Endothelial cell of umbilical vein (primary cell): ENCODE measurements at regions of chr2 and their contacts with region 1.

Region 1: DNA sequence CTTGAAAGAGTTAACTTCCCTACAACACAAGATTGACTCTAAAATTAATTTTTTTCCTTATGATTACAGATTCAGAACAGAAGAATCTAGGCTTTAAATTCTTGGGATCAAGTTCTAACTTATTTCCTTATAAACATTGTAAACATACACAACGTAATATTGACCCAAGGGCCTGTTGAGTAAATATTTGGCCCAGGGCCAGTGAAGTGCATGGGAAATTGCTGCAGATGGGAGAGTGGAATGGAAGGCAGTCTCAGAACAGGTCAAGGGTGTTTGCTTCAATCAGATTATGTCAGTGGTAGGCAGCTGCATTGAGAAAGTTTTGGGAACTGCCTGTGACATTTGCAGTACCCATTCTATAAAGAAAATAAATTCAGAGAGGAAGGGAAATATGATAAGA is 137.6 kb downstream of the MYO1B start:
- DNase-seq: peak; percentile 78
- H3K4me3 ChIP-seq: no peak overlapping the region
- H3K27ac ChIP-seq: peak overlapping the region; percentile 23
- H3K4me1 ChIP-seq: peaks cover 53% of the 10 kb centered on the region
- H3K27me3 ChIP-seq: no peaks in the 10 kb centered on the region
- CTCF ChIP-seq: no peak
- POLR2A ChIP-seq: no peak

Region 2: DNA sequence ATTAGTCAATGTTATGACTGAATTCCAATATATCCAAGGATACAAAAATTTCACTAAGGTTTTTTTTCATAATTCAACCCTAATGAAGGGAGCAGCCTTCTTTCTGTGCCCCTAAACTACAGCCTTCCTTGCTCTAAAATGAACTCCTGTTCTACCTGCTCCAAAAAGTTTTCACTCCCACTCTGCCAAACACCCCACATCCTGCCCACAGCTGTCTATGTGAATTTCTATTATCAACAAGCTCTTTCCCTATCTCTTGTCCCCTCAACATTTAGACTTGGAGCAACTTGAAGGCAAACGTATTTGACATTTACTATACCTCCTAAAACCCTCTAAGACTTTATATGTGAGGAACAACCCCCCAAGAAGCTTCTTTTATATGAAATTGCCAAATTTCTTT is 234.5 kb before region 1 on chr2:
- CTCF ChIA-PET with region 1: no interaction called
- POLR2A ChIA-PET with region 1: no interaction called
- dilution Hi-C with region 1: no loop called
- intact Hi-C with region 1: no loop called
- DNase-seq: no peak
- H3K4me3 ChIP-seq: no peak overlapping the region
- H3K27ac ChIP-seq: no peak overlapping the region
- H3K4me1 ChIP-seq: no peaks in the 10 kb centered on the region
- H3K27me3 ChIP-seq: peaks cover 3 to 7% of the 10 kb centered on the region in 2 experiments
- CTCF ChIP-seq: no peak
- POLR2A ChIP-seq: no peak

Region 3: DNA sequence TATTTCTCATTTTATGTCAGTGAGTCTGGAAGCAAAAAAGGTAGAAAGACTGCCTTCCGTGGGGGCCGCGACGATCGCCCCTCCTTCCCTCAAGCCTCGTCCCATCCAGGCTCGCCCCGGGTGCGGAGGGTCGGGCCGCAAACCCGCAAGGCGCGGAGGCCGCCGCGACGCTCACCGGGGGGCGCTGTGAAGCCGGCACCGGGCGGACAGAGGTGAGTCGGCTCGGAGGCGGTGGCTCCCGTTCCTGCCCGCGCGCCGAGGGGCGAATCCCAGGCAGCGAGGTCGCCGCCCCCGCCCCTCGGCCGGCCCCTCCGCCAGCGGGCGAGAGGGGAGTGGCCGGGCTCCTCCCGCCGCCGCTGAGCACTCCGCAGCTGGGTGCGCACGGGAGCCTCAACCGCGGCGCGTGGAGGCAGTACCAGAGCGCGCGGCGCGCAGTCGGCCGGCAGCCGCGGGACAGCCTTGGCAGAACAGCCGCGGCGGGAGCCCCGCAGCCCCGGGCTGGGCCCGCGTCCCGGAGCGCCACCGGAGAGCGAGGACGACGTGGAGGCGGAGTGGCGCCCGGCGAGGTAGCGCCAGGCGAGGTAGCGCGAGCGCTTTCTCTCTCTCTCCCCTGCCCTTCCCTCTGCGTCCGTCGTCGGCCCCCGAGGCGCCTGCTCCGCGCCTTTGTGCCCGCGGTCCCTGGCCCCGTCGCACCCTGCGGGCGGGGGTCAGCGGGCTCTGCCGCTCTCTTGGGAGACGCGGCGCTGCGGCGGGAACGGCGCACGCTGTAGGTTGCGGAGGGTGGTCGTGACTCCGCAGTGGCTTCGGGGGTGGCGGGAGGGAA is 137.5 kb before region 1 on chr2 and contains the start of gene MYO1B:
- CTCF ChIA-PET with region 1: interaction called, 3 read pairs
- POLR2A ChIA-PET with region 1: no interaction called
- dilution Hi-C with region 1: no loop called
- intact Hi-C with region 1: loop called (anchors 1 kb)
- DNase-seq: peak; percentile 68
- H3K4me3 ChIP-seq: peak within 1 kb of the TSS; percentile 56 to 78 (median 78)
- H3K27ac ChIP-seq: peak within 1 kb of the TSS; percentile 85
- H3K4me1 ChIP-seq: peaks cover 21% of the 10 kb centered on the region
- H3K27me3 ChIP-seq: no peaks in the 10 kb centered on the region
- CTCF ChIP-seq: peak; percentile 57
- POLR2A ChIP-seq: peak; percentile 57
- total RNA-seq, gene MYO1B: 51.1 and 55.4 TPM in 2 replicates

Region 4: GRCh38 chr2:191302459-191303139 is 80.2 kb before region 1 on chr2:
- CTCF ChIA-PET with region 1: no interaction called
- POLR2A ChIA-PET with region 1: no interaction called
- dilution Hi-C with region 1: no loop called
- intact Hi-C with region 1: loop called (anchors 1 kb)
- DNase-seq: peak; percentile 17
- H3K4me3 ChIP-seq: no peak overlapping the region
- H3K27ac ChIP-seq: no peak overlapping the region
- H3K4me1 ChIP-seq: no peaks in the 10 kb centered on the region
- H3K27me3 ChIP-seq: no peaks in the 10 kb centered on the region
- CTCF ChIP-seq: peak; percentile 12 to 25
- POLR2A ChIP-seq: no peak

Region 5: GRCh38 chr2:191321861-191322686 is 60.7 kb before region 1 on chr2:
- CTCF ChIA-PET with region 1: no interaction called
- POLR2A ChIA-PET with region 1: no interaction called
- dilution Hi-C with region 1: no loop called
- intact Hi-C with region 1: loop called (anchors 2 kb)
- DNase-seq: peak; percentile 33
- H3K4me3 ChIP-seq: peak overlapping the region in 1 of 3 experiments; percentile 18
- H3K27ac ChIP-seq: peak overlapping the region; percentile 15
- H3K4me1 ChIP-seq: peaks cover 21% of the 10 kb centered on the region
- H3K27me3 ChIP-seq: no peaks in the 10 kb centered on the region
- CTCF ChIP-seq: no peak
- POLR2A ChIP-seq: no peak